Activated B cell treated with CpG ODN at 0.5 μM for 24 hours (primary cell): ENCODE measurements at regions of chr1 and their contacts with region 1.

Region 1: DNA sequence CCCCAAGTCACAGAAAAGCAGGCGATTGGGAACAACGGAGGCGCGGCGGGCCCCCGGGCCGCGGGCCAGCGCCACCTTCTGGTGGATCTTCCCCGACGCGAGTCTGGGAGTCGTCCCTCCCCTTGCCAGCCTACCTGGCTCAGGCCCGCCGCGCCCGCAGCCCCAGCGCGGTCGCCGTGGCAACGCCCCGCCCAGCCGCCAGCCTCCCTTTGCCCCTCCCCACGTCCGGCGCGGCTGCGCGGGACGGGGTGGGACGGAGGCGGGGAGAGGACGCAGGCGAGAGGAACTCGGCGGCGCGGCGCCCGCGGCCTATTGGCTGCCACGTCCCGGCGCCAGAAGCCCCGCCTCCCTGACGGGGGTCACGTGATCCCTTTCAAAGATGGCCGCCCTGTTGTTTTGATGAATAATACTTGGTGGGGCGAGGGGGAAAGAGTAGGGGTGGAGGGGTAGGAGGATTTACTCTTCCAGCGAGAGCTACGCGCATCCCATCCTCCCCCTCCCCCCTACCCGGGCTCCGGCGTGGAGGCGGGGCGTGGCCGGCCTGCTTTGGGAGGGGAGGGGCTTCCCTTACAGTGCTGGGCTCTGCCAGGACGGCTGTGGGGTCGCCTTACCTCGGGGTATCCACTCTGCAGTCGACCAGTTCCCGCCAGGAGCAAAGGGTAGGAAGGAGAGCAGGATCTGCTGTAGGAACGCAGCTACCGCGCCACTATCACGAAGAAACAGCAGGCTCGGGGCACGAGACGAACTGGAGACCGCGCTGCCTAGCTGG is at the start of gene UBE4B:
- DNase-seq: peak; percentile 99
- ATAC-seq: peak; percentile 96
- H3K4me3 Mint-ChIP-seq: peak within 1 kb of the TSS; percentile 96
- H3K27ac Mint-ChIP-seq: peak within 1 kb of the TSS; percentile 93
- H3K4me1 Mint-ChIP-seq: peaks cover 24% of the 10 kb centered on the region
- H3K27me3 Mint-ChIP-seq: no peaks in the 10 kb centered on the region
- CTCF ChIP-seq: peak; percentile 55
- total RNA-seq, gene UBE4B: 41.1 and 44.7 TPM in 2 replicates

Region 2: GRCh38 chr1:9539165-9539828 is 493.5 kb before region 1 on chr1 and contains the start of gene SLC25A33:
- CTCF ChIA-PET with region 1: no interaction called
- POLR2A ChIA-PET with region 1: no interaction called
- intact Hi-C with region 1: loop called (anchors 1 kb)
- DNase-seq: peak; percentile 99
- ATAC-seq: peak; percentile 96
- H3K4me3 Mint-ChIP-seq: peak within 1 kb of the TSS; percentile 92
- H3K27ac Mint-ChIP-seq: peak within 1 kb of the TSS; percentile 90
- H3K4me1 Mint-ChIP-seq: peaks cover 29% of the 10 kb centered on the region
- H3K27me3 Mint-ChIP-seq: no peaks in the 10 kb centered on the region
- CTCF ChIP-seq: no peak
- total RNA-seq, gene SLC25A33: 6.5 and 7.5 TPM in 2 replicates

Region 3: GRCh38 chr1:9753121-9753531 is 279.6 kb before region 1 on chr1:
- CTCF ChIA-PET with region 1: no interaction called
- POLR2A ChIA-PET with region 1: no interaction called
- intact Hi-C with region 1: no loop called
- DNase-seq: no peak
- ATAC-seq: no peak
- H3K4me3 Mint-ChIP-seq: no peak overlapping the region
- H3K27ac Mint-ChIP-seq: no peak overlapping the region
- H3K4me1 Mint-ChIP-seq: no peaks in the 10 kb centered on the region
- H3K27me3 Mint-ChIP-seq: no peaks in the 10 kb centered on the region
- CTCF ChIP-seq: no peak

Region 4: GRCh38 chr1:9784508-9785133 is 248.2 kb before region 1 on chr1:
- CTCF ChIA-PET with region 1: no interaction called
- POLR2A ChIA-PET with region 1: no interaction called
- intact Hi-C with region 1: loop called (anchors 10 kb)
- DNase-seq: no peak
- ATAC-seq: peak; percentile 47
- H3K4me3 Mint-ChIP-seq: no peak overlapping the region
- H3K27ac Mint-ChIP-seq: no peak overlapping the region
- H3K4me1 Mint-ChIP-seq: peaks cover 33% of the 10 kb centered on the region
- H3K27me3 Mint-ChIP-seq: no peaks in the 10 kb centered on the region
- CTCF ChIP-seq: peak; percentile 68

Region 5: DNA sequence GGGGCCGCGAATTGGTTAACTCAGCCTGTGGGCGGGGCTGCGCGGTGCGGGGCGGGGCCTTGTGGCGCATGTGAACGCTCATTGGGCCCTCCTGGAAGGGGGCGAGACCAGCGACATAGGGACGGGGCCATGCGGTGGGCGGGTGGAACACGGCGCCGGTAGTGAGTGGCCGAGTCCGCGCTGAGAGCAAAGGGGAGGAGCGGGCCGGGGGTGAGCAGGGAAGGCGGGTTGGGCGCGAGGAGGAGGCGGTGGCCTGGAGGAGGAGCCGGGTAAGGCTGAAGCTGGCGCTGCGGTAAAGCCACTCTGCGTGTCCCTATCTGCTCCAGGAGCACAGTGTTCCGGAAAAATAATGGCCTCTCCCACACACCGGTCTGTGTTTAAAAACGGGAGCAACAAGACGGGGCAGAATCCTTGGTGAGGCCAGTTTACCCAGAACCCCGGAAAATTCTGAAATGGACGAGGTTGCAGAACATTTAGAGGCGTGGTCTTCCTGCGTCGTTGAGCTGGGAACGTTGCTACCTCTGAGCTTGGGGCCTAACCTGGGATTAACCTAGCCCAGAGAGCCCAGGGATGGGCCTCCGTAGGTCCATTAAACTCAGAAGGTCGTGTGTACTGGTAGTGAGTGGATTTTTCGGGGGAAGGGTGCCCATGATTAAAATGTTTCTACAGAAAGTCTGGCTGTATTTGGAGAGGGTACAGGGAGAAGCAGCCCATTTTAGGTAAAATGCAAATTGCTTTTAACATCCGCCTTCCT is 122.2 kb before region 1 on chr1:
- CTCF ChIA-PET with region 1: no interaction called
- POLR2A ChIA-PET with region 1: interaction called, 7 read pairs
- intact Hi-C with region 1: loop called (anchors 1 kb)
- DNase-seq: no peak
- ATAC-seq: peak; percentile 90
- H3K4me3 Mint-ChIP-seq: peak overlapping the region; percentile 97
- H3K27ac Mint-ChIP-seq: peak overlapping the region; percentile 99
- H3K4me1 Mint-ChIP-seq: peaks cover 22% of the 10 kb centered on the region
- H3K27me3 Mint-ChIP-seq: no peaks in the 10 kb centered on the region
- CTCF ChIP-seq: no peak

Region 6: GRCh38 chr1:9960706-9961562 is 71.8 kb before region 1 on chr1:
- CTCF ChIA-PET with region 1: no interaction called
- POLR2A ChIA-PET with region 1: no interaction called
- intact Hi-C with region 1: loop called (anchors 2 kb)
- DNase-seq: peak; percentile 50
- ATAC-seq: peak; percentile 99
- H3K4me3 Mint-ChIP-seq: peak overlapping the region; percentile 44
- H3K27ac Mint-ChIP-seq: peak overlapping the region; percentile 75
- H3K4me1 Mint-ChIP-seq: peaks cover 15% of the 10 kb centered on the region
- H3K27me3 Mint-ChIP-seq: no peaks in the 10 kb centered on the region
- CTCF ChIP-seq: no peak

Region 7: GRCh38 chr1:9996624-9997582 is 35.9 kb before region 1 on chr1 and contains the start of gene RBP7:
- CTCF ChIA-PET with region 1: no interaction called
- POLR2A ChIA-PET with region 1: no interaction called
- intact Hi-C with region 1: no loop called
- DNase-seq: peak; percentile 21
- ATAC-seq: peak; percentile 34
- H3K4me3 Mint-ChIP-seq: peak within 1 kb of the TSS; percentile 80
- H3K27ac Mint-ChIP-seq: no peak within 1 kb of the TSS
- H3K4me1 Mint-ChIP-seq: peaks cover 11% of the 10 kb centered on the region
- H3K27me3 Mint-ChIP-seq: peaks cover 28% of the 10 kb centered on the region
- CTCF ChIP-seq: no peak
- total RNA-seq, gene RBP7: not detected in 2 replicates

Region 8: GRCh38 chr1:10074059-10074851 is 41.5 kb after region 1 on chr1:
- CTCF ChIA-PET with region 1: no interaction called
- POLR2A ChIA-PET with region 1: no interaction called
- intact Hi-C with region 1: no loop called
- DNase-seq: no peak
- ATAC-seq: no peak
- H3K4me3 Mint-ChIP-seq: no peak overlapping the region
- H3K27ac Mint-ChIP-seq: no peak overlapping the region
- H3K4me1 Mint-ChIP-seq: peaks cover 9% of the 10 kb centered on the region
- H3K27me3 Mint-ChIP-seq: no peaks in the 10 kb centered on the region
- CTCF ChIP-seq: no peak

Region 9: DNA sequence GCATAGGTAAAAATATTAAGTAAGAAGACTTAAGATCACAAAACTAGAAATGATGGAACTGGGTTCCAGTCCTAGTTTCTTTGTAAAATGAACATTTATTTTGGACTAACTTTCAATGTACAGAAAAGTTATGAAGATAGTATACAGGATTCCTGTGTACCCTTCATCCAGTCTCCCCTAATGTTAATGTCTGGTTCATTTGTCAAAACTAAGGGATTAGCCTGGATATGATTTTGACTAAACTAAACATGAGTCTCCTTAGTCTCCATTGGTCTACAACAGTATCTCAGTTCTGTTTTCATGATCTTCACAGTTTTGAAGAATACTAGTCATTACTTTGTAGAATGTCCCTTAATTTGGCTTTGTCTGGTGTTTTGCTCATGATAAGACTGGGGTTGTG is 54.4 kb after region 1 on chr1:
- CTCF ChIA-PET with region 1: no interaction called
- POLR2A ChIA-PET with region 1: no interaction called
- intact Hi-C with region 1: no loop called
- DNase-seq: no peak
- ATAC-seq: no peak
- H3K4me3 Mint-ChIP-seq: no peak overlapping the region
- H3K27ac Mint-ChIP-seq: no peak overlapping the region
- H3K4me1 Mint-ChIP-seq: no peaks in the 10 kb centered on the region
- H3K27me3 Mint-ChIP-seq: no peaks in the 10 kb centered on the region
- CTCF ChIP-seq: no peak

Region 10: GRCh38 chr1:10430216-10431069 is 397.7 kb after region 1 on chr1 and contains the start of gene CENPS:
- CTCF ChIA-PET with region 1: no interaction called
- POLR2A ChIA-PET with region 1: no interaction called
- intact Hi-C with region 1: loop called (anchors 2 kb)
- DNase-seq: peak; percentile 91
- ATAC-seq: peak; percentile 86
- H3K4me3 Mint-ChIP-seq: peak within 1 kb of the TSS; percentile 92
- H3K27ac Mint-ChIP-seq: peak within 1 kb of the TSS; percentile 96
- H3K4me1 Mint-ChIP-seq: peaks cover 28% of the 10 kb centered on the region
- H3K27me3 Mint-ChIP-seq: no peaks in the 10 kb centered on the region
- CTCF ChIP-seq: peak; percentile 57
- total RNA-seq, gene CENPS: 9.2 and 15.2 TPM in 2 replicates